ENCODE measurements at regions of chr5 and their contacts with region 1.

Region 1: GRCh38 chr5:177362610-177363507 is 5.1 kb downstream of the RGS14 start:
- DNase-seq: peak; percentile 48
- H3K4me3 ChIP-seq: peak overlapping the region; percentile 60
- H3K27ac ChIP-seq: peak overlapping the region; percentile 84
- H3K4me1 ChIP-seq: peaks cover 62% of the 10 kb centered on the region
- CTCF ChIP-seq: no peak

Region 2: GRCh38 chr5:177351385-177352329 is 11.2 kb before region 1 on chr5 and contains the start of gene LMAN2:
- CTCF ChIA-PET with region 1: no interaction called
- POLR2A ChIA-PET with region 1: interaction called, 35 read pairs
- intact Hi-C with region 1: no loop called
- DNase-seq: peak; percentile 97
- H3K4me3 ChIP-seq: peak within 1 kb of the TSS; percentile 90
- H3K27ac ChIP-seq: peak within 1 kb of the TSS; percentile 91
- H3K4me1 ChIP-seq: peaks cover 47% of the 10 kb centered on the region
- CTCF ChIP-seq: no peak
- total RNA-seq, gene LMAN2: 144 and 151 TPM in 2 replicates

Region 3: GRCh38 chr5:177432143-177432904 is 69.5 kb after region 1 on chr5:
- CTCF ChIA-PET with region 1: no interaction called
- POLR2A ChIA-PET with region 1: no interaction called
- intact Hi-C with region 1: no loop called
- DNase-seq: no peak
- H3K4me3 ChIP-seq: peak overlapping the region; percentile 77
- H3K27ac ChIP-seq: peak overlapping the region; percentile 87
- H3K4me1 ChIP-seq: peaks cover 53% of the 10 kb centered on the region
- CTCF ChIP-seq: no peak

Region 4: DNA sequence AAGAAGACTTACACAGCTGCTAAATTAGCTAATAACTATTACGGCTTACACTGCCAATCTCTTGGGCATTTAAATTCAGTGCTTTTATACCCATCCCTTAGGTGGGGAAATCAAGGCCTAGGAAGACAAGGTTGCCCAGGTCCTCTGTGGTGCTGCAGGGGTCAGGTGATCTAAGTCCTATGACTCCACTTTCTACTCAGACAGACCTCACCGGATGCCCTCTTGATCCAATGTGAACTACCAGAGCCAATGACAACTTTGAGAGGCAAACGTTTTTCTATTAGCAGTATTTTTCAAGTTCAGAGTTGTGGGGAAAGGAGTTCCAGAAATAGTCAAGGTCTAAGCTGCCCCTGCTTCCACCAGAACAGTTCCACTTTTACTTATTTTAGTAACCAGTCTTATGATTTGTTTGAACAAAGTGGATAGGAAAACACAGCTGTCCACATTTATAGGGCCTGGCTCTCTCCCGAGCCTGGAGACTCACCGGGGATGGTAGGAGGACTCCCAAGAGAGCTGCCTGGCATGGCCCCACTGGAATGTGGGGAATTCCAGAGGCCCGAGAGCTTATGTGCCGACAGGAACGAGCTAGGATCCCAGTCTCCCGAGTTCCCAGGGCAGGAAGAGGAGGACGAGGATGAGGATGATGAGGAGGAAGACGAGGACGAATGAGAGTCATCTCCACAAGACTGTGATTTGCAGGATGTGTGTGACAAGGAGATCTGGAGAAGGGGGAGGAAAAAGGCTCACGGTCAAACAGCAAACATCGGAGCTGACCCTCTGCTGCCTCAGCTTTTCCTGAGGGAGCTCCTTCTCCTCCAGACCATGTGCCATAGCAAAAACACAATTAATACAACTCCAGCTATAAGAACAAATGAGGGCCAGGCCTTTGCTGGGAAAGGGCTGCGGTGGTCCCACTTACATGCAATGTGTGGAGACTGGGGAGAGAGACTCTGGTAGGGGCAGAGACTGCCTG is 174.8 kb after region 1 on chr5:
- CTCF ChIA-PET with region 1: no interaction called
- POLR2A ChIA-PET with region 1: no interaction called
- intact Hi-C with region 1: no loop called
- DNase-seq: no peak
- H3K4me3 ChIP-seq: no peak overlapping the region
- H3K27ac ChIP-seq: no peak overlapping the region
- H3K4me1 ChIP-seq: no peaks in the 10 kb centered on the region
- CTCF ChIP-seq: no peak

Measured in OCI-LY7 (cell line).